Activated naive CD4-positive, alpha-beta T cell treated with anti-CD3 and anti-CD28 coated beads for 36 hours (primary cell): ENCODE measurements at regions of chr1 and their contacts with region 1.

Region 1: GRCh38 chr1:160768295-160768657 is 27.7 kb upstream of the LY9 start:
- DNase-seq: peak; percentile 96
- H3K4me3 Mint-ChIP-seq: peak overlapping the region; percentile 79
- H3K27ac Mint-ChIP-seq: peak overlapping the region; percentile 99
- H3K4me1 Mint-ChIP-seq: peaks cover 68% of the 10 kb centered on the region
- H3K27me3 Mint-ChIP-seq: no peaks in the 10 kb centered on the region

Region 2: DNA sequence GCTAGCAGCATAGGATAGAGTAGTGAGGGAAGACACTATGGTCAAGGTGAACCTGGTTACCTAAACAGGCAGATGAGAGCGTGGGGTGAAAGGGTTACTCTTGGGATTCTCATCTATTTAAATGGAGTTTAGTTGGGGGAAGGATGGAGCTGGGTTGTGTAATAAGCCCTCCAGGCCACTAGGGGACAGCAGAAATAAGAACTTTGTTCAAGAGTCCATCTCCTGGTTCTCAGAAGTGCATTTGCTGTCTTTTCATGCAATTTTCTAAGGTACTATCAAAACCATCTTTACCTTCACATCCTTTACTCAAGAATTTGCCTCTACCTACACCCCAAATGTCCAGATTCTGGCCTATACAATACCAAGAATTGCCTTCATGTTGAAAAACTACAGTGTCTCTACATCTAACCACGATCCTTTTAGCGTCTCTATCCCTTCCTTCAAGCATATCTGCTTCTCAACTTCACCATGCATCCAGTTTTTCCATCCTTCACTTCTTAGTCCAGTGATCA is 149.5 kb before region 1 on chr1:
- CTCF ChIA-PET with region 1: interaction called, 13 read pairs
- intact Hi-C with region 1: loop called (anchors 2 kb)
- DNase-seq: peak; percentile 70
- H3K4me3 Mint-ChIP-seq: no peak overlapping the region
- H3K27ac Mint-ChIP-seq: peak overlapping the region; percentile 61
- H3K4me1 Mint-ChIP-seq: peaks cover 57% of the 10 kb centered on the region
- H3K27me3 Mint-ChIP-seq: no peaks in the 10 kb centered on the region

Region 3: GRCh38 chr1:160726498-160727315 is 41.6 kb before region 1 on chr1:
- CTCF ChIA-PET with region 1: interaction called, 174 read pairs
- intact Hi-C with region 1: loop called (anchors 1 kb)
- DNase-seq: peak; percentile 81
- H3K4me3 Mint-ChIP-seq: no peak overlapping the region
- H3K27ac Mint-ChIP-seq: no peak overlapping the region
- H3K4me1 Mint-ChIP-seq: peaks cover 34% of the 10 kb centered on the region
- H3K27me3 Mint-ChIP-seq: no peaks in the 10 kb centered on the region

Region 4: GRCh38 chr1:160739098-160739511 is 29.2 kb before region 1 on chr1 and contains the start of gene SLAMF7:
- CTCF ChIA-PET with region 1: interaction called, 36 read pairs
- intact Hi-C with region 1: loop called (anchors 1 kb)
- DNase-seq: peak; percentile 77
- H3K4me3 Mint-ChIP-seq: peak within 1 kb of the TSS; percentile 88
- H3K27ac Mint-ChIP-seq: peak within 1 kb of the TSS; percentile 94
- H3K4me1 Mint-ChIP-seq: peaks cover 87% of the 10 kb centered on the region
- H3K27me3 Mint-ChIP-seq: no peaks in the 10 kb centered on the region
- total RNA-seq, gene SLAMF7: 79.9 to 82.2 TPM

Region 5: GRCh38 chr1:160755911-160756848 is 12.1 kb before region 1 on chr1:
- CTCF ChIA-PET with region 1: interaction called, 30 read pairs
- intact Hi-C with region 1: loop called (anchors 1 kb)
- DNase-seq: peak; percentile 58
- H3K4me3 Mint-ChIP-seq: no peak overlapping the region
- H3K27ac Mint-ChIP-seq: peak overlapping the region; percentile 87
- H3K4me1 Mint-ChIP-seq: peaks cover 58% of the 10 kb centered on the region
- H3K27me3 Mint-ChIP-seq: no peaks in the 10 kb centered on the region

Region 6: DNA sequence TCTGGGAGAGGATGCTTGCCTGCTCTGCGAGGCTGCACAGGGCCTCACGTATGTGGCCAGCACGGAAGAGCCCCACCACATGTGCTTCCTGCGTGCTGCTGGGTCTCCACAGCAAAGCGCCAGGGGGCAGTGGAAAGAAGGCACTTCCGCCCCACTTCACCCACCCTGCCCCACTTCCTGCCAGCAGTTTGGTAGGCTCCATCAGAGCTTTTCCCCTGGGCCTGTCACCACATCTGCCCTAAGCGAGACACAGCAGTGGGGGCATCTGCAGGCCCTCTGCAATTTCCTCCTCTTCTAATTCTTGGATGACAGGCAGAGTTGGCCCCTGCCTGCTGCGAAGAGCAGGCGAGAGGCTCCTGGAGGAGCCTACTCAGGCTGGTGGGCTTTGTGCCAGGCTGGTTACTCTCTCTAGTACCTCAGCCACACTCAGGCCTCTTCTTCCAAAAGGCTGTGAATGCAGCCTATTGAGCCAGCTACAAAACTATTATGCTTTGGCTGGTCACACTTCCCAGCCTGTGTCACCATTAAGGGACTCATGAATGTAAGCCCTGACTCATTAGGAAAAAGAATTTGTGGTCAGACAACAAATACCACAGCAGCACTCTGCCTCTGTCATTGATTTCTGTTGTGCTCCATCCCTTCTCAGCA is 69.4 kb after region 1 on chr1:
- CTCF ChIA-PET with region 1: interaction called, 11 read pairs
- intact Hi-C with region 1: no loop called
- DNase-seq: peak; percentile 90
- H3K4me3 Mint-ChIP-seq: peak overlapping the region; percentile 16
- H3K27ac Mint-ChIP-seq: peak overlapping the region; percentile 82
- H3K4me1 Mint-ChIP-seq: peaks cover 49% of the 10 kb centered on the region
- H3K27me3 Mint-ChIP-seq: no peaks in the 10 kb centered on the region